HCT116 (cell line): ENCODE measurements at regions of chr10 and their contacts with region 1.

Region 1: GRCh38 chr10:102917962-102918816 is at the start of gene CNNM2:
- DNase-seq: peak; percentile 100
- ATAC-seq: peak; percentile 87
- H3K4me3 ChIP-seq: peak within 1 kb of the TSS; percentile 71 to 85
- H3K27ac ChIP-seq: peak within 1 kb of the TSS; percentile 77
- H3K4me1 ChIP-seq: peaks cover 12 to 24% of the 10 kb centered on the region in 2 experiments
- H3K27me3 ChIP-seq: no peaks in the 10 kb centered on the region
- CTCF ChIP-seq: no peak
- POLR2A ChIP-seq: peak; percentile 86
- RAD21 ChIP-seq: no peak
- total RNA-seq, gene CNNM2: 23.1 TPM

Region 2: GRCh38 chr10:102904346-102904745 is 13.8 kb before region 1 on chr10:
- CTCF ChIA-PET with region 1: interaction called, 20 read pairs
- POLR2A ChIA-PET with region 1: no interaction called
- RAD21 ChIA-PET with region 1: interaction called in 1 of 2 experiments, 3 read pairs
- intact Hi-C with region 1: no loop called
- DNase-seq: no peak
- ATAC-seq: no peak
- H3K4me3 ChIP-seq: no peak overlapping the region
- H3K27ac ChIP-seq: no peak overlapping the region
- H3K4me1 ChIP-seq: no peaks in the 10 kb centered on the region
- H3K27me3 ChIP-seq: no peaks in the 10 kb centered on the region
- CTCF ChIP-seq: no peak
- POLR2A ChIP-seq: no peak
- RAD21 ChIP-seq: no peak

Region 3: DNA sequence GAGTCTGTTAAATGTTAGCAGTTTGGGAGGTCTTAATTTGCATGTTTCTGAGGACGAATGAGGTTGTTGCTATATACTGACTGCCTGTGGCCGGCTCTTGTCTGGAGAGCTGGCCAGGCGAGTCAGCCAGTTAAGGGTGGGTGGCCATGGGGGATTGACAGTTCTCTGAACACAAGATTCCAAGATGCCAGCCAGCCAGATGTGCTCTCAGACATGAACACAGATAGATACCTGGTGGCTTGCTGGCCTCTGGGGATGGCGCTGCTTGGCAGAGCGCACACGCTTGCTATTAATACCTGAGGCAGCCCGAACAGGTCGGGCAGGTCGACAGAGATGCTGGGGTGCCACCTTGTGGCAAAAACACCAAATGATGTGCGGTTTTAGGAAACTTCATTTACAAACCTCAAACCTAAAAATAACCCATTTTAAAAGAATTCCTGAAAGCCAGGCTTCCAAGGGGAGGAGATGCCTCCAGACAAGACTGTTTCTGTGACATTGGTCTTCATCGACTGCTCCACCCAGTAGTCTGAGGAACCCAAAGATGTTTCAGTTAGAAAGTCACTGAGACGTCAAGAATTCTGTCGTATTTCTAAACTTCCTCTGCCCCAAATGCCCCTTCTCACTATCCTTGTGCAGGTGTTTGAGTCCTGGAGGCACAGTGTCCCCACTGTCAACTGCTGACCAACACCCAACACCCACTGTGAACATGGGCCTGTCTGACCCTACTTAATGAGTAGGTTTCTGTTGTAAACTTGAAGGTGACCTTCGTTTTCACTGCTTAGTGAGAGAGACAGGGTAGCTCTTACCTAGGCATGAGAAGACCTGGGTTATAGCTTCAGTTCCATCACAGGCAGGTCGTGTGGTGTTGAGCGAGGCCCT is 151.5 kb after region 1 on chr10:
- CTCF ChIA-PET with region 1: interaction called, 42 read pairs
- POLR2A ChIA-PET with region 1: no interaction called
- RAD21 ChIA-PET with region 1: interaction called, 11 to 16 read pairs
- intact Hi-C with region 1: loop called (anchors 1 kb)
- DNase-seq: peak; percentile 59
- ATAC-seq: peak; percentile 93
- H3K4me3 ChIP-seq: no peak overlapping the region
- H3K27ac ChIP-seq: no peak overlapping the region
- H3K4me1 ChIP-seq: peaks cover 3 to 6% of the 10 kb centered on the region in 2 experiments; a peak in 1 of 4 replicates
- H3K27me3 ChIP-seq: no peaks in the 10 kb centered on the region
- CTCF ChIP-seq: peak; percentile 75 to 98 (median 94)
- POLR2A ChIP-seq: no peak
- RAD21 ChIP-seq: peak; percentile 98

Region 4: GRCh38 chr10:103196516-103196915 is 278.3 kb after region 1 on chr10:
- CTCF ChIA-PET with region 1: no interaction called
- POLR2A ChIA-PET with region 1: no interaction called
- RAD21 ChIA-PET with region 1: no interaction called
- intact Hi-C with region 1: no loop called
- DNase-seq: no peak
- ATAC-seq: no peak
- H3K4me3 ChIP-seq: no peak overlapping the region
- H3K27ac ChIP-seq: no peak overlapping the region
- H3K4me1 ChIP-seq: peaks cover 27 to 48% of the 10 kb centered on the region in 2 experiments
- H3K27me3 ChIP-seq: no peaks in the 10 kb centered on the region
- CTCF ChIP-seq: no peak
- POLR2A ChIP-seq: no peak
- RAD21 ChIP-seq: no peak

Region 5: DNA sequence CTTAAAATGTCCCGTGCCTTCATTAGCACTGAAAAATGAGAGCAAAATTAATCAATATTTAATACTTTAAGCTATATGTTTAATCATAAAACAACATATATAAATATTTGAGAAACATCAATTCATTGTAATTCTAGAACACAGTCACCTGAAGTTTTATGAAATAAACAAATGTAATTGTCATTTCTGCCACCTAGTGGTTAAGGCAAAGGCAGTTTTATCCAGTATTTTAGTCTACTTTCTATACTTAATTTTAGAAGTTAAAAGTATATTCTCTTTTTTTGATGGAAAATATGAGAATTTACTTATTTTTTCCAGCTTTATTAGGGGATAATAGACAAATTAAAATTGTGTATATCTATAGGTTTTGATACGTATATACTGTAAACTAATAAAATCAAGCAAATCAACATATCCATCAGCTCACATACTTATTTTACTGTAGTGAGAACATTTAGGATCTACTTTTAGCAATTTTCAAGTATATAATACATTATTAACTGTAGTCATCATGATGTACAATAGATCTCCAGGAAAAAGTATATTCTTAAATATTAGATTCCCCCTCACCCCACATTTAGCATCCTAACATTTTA is 415.8 kb after region 1 on chr10:
- CTCF ChIA-PET with region 1: interaction called, 18 read pairs
- POLR2A ChIA-PET with region 1: interaction called, 3 read pairs
- RAD21 ChIA-PET with region 1: interaction called in 1 of 2 experiments, 3 read pairs
- intact Hi-C with region 1: loop called (anchors 2 kb)
- DNase-seq: peak; percentile 32
- ATAC-seq: no peak
- H3K4me3 ChIP-seq: no peak overlapping the region
- H3K27ac ChIP-seq: no peak overlapping the region
- H3K4me1 ChIP-seq: no peaks in the 10 kb centered on the region
- H3K27me3 ChIP-seq: no peaks in the 10 kb centered on the region
- CTCF ChIP-seq: peak; percentile 68 to 90 (median 77)
- POLR2A ChIP-seq: no peak
- RAD21 ChIP-seq: peak; percentile 84

Region 6: DNA sequence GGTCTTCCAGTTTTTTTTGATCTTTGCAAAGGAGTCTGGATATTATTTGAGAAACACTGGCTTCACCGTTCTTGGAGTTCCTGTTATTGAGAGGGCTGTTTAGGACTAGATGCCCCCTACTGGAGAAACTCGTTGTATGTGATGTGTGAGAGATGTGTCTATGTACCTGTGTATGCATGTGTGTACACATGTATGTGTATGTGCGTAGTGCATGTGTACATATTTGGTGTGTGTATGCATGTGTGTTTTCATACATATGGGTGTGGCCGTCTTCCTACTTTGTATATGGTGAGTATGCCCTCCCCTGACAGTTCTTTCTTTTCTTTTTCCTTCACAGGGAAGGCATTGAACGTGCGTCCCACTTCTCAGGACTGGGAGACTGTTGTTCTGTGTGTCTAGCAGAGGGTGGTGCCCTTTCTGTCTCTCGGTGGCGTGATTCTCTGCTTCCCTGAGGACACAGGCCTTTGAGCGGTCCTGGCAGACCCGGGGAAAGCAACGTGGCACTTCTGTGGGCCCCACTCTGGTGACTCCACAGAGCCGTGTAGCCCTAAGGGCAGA is 563.9 kb after region 1 on chr10:
- CTCF ChIA-PET with region 1: interaction called, 10 read pairs
- POLR2A ChIA-PET with region 1: no interaction called
- RAD21 ChIA-PET with region 1: interaction called, 3 read pairs
- intact Hi-C with region 1: loop called (anchors 2 kb)
- DNase-seq: peak; percentile 87
- ATAC-seq: peak; percentile 69
- H3K4me3 ChIP-seq: no peak overlapping the region
- H3K27ac ChIP-seq: no peak overlapping the region
- H3K4me1 ChIP-seq: peaks cover 18 to 45% of the 10 kb centered on the region in 2 experiments
- H3K27me3 ChIP-seq: no peaks in the 10 kb centered on the region
- CTCF ChIP-seq: peak; percentile 83 to 91 (median 87)
- POLR2A ChIP-seq: no peak
- RAD21 ChIP-seq: peak; percentile 82